HepG2 (cell line): ENCODE measurements at regions of chr2 and their contacts with region 1.

Region 1: DNA sequence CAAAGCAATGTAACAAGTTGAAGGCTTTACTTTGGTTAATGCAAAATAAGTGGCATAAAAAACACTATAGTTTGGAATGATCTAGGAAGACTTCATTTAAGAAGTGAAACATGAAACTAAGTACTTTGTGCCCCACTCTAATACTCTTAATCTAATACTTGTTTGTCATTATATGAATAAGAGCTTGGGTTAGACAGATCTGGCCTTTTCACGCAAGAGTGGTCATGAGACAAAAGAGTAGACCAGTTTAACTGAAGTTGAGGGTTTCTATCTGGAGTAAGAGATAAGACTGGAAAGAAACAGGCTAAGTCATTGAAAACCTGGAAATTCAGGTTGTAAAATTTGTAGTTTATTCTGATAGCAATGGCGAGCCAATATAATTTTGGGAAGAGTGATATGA is 2.8 kb downstream of the SLC30A6 start:
- DNase-seq: no peak
- ATAC-seq: no peak
- H3K4me3 ChIP-seq: no peak overlapping the region
- H3K27ac ChIP-seq: no peak overlapping the region
- H3K4me1 ChIP-seq: peaks cover 22% of the 10 kb centered on the region
- H3K27me3 ChIP-seq: no peaks in the 10 kb centered on the region
- CTCF ChIP-seq: no peak
- EP300 ChIP-seq: no peak
- POLR2A ChIP-seq: no peak
- RAD21 ChIP-seq: no peak

Region 2: DNA sequence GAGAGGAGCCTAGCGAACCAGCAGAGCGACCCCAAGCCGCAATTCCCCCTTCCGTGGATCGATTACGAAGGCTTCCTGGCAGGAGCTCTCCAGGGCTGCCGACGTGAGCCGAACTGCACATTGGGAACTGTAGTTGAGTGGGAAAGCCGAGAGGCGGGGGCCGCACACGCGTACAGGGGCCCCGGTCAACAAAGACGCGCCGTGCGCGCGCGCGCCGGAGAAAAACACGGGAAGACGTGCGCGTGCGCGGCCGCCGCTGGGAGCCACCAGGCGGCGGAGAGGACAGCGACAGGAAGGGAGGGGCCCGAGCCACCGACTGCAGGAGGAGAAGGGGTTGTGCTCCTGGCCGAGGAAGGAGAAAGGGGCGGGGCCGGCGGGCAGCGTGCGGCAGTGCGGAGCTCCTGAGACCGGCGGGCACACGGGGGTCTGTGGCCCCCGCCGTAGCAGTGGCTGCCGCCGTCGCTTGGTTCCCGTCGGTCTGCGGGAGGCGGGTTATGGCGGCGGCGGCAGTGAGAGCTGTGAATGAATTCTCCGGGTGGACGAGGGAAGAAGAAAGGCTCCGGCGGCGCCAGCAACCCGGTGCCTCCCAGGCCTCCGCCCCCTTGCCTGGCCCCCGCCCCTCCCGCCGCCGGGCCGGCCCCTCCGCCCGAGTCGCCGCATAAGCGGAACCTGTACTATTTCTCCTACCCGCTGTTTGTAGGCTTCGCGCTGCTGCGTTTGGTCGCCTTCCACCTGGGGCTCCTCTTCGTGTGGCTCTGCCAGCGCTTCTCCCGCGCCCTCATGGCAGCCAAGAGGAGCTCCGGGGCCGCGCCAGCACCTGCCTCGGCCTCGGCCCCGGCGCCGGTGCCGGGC is 105.0 kb before region 1 on chr2 and contains the start of gene SPAST:
- CTCF ChIA-PET with region 1: no interaction called
- POLR2A ChIA-PET with region 1: interaction called, 62 read pairs
- in situ Hi-C with region 1: no loop called
- intact Hi-C with region 1: no loop called
- DNase-seq: peak; percentile 98
- ATAC-seq: peak; percentile 92
- H3K4me3 ChIP-seq: peak within 1 kb of the TSS; percentile 75 to 95 (median 87)
- H3K27ac ChIP-seq: peak within 1 kb of the TSS; percentile 95
- H3K4me1 ChIP-seq: peaks cover 31% of the 10 kb centered on the region
- H3K27me3 ChIP-seq: no peaks in the 10 kb centered on the region; a peak in 1 of 5 replicates
- CTCF ChIP-seq: peak; percentile 65
- EP300 ChIP-seq: peak in 1 of 2 experiments; percentile 42; a peak in 2 of 4 replicates
- POLR2A ChIP-seq: peak; percentile 91
- RAD21 ChIP-seq: no peak; the same call in none of the 2 replicates
- total RNA-seq, gene SPAST: 40.4 and 41.5 TPM in 2 replicates

Region 3: DNA sequence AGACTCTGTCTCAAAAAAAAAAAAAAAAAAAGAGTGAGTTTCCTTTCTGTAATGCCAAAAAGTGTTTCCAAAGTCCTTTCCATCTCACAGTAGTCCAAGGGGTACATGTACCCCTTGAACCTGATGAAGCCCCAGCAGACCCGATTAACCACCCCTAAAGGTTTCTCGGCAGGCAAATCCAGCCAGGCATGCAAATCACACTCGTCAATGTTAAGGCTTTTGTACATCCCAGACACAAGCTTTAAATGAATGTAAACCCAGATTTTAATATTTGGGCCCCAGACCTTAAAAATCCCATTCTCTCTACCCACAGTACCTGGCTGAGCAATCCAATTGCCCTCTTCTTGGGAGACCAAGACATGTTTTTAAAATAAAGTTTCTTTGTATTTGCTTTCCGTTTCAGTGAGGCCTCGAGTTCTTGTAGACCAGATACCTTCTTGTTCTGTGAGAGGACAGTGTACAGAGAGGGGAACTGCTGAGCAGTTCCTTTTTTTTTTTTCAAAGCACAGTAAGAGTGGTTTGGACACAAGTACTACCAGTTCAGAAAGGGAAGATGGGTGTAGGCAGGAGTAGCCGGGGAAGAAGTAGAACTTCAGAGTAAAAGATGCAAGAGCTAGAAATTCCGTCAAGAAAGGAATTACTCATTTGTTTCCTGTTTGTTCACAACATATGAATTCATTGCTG is 96.1 kb after region 1 on chr2 and contains the start of gene NLRC4:
- CTCF ChIA-PET with region 1: no interaction called
- POLR2A ChIA-PET with region 1: interaction called, 12 read pairs
- in situ Hi-C with region 1: no loop called
- intact Hi-C with region 1: no loop called
- DNase-seq: no peak
- ATAC-seq: peak; percentile 22
- H3K4me3 ChIP-seq: peak within 1 kb of the TSS; percentile 19 to 45 (median 22)
- H3K27ac ChIP-seq: peak within 1 kb of the TSS; percentile 9
- H3K4me1 ChIP-seq: peaks cover 39% of the 10 kb centered on the region
- H3K27me3 ChIP-seq: no peaks in the 10 kb centered on the region; a peak in 1 of 5 replicates
- CTCF ChIP-seq: no peak
- EP300 ChIP-seq: no peak
- POLR2A ChIP-seq: no peak
- RAD21 ChIP-seq: no peak
- total RNA-seq, gene NLRC4: 0.06 and 0.15 TPM in 2 replicates

Region 4: DNA sequence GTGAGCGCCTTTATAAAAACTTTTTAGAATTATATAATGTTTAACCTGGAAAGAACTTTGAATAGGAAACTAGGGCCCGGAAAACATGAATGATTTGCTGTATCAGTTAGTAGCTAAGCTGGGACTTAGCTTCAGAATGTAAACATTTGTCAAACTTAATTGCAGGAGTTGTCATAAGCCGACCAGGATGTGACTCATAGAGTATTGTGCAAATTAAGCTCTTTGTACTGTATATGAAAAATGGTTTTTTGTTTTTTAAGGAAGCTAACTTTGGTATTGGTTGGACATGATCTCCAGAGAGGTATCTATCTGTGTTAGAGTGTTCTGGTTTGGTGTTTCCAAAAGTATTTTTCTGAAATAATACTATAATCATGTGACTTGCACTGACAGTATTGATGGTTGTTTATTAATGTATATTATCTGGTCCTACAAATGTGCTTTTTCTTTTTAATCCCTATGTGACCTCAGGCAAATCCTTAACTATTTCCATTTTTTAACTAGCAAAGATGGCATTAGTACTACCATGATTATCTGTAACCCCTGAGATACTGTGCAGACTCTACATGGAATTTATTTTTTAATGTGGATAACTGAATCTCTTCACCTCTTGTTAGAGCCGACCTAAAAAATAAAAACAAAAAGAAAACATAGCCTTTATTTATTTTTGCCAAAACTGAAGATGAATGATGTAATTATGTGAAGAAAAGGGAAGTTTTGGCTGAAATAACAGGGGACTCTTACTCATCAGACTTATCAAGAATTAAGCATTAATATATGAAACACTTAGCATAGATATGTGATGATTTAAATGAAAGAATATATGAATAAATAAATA is 120.9 kb after region 1 on chr2:
- CTCF ChIA-PET with region 1: no interaction called
- POLR2A ChIA-PET with region 1: interaction called, 11 read pairs
- in situ Hi-C with region 1: no loop called
- intact Hi-C with region 1: no loop called
- DNase-seq: peak; percentile 80
- ATAC-seq: peak; percentile 81
- H3K4me3 ChIP-seq: no peak overlapping the region; a peak in 1 of 6 replicates
- H3K27ac ChIP-seq: peak overlapping the region; percentile 56
- H3K4me1 ChIP-seq: peaks cover 30% of the 10 kb centered on the region
- H3K27me3 ChIP-seq: no peaks in the 10 kb centered on the region
- CTCF ChIP-seq: no peak
- EP300 ChIP-seq: peak in 1 of 2 experiments; percentile 80; a peak in 2 of 4 replicates
- POLR2A ChIP-seq: no peak
- RAD21 ChIP-seq: no peak